Aorta (tissue), 5 donors: ENCODE measurements at regions of chr1 and their contacts with region 1.

Region 1: DNA sequence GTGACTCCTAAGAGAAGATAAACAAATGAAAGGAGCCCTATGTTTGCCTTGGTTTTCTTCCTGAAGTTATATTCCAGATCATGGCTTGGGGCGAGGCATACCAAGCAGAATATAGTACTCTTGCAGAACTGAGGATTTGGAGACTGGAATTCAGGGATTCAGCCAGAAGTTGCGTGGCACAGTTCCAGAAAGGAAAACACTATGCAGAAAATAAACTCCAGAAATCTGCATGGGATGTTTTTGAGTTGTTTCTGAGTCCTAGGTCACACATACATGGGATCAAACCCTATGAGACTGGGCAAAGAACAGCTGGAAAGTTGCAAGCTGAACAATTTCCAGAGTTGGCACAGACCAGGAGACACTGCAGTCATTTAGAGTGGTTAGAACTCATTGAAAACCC is 42.9 kb upstream of the IFFO2 start:
- DNase-seq: no peak
- ATAC-seq: peak; percentile 70
- H3K4me3 ChIP-seq: no peak overlapping the region
- H3K27ac ChIP-seq: peak overlapping the region in 1 of 2 donors; percentile 93
- H3K4me1 ChIP-seq: peaks cover 4 to 7% of the 10 kb centered on the region in 2 donors
- H3K27me3 ChIP-seq: no peaks in the 10 kb centered on the region

Region 2: GRCh38 chr1:18805925-18806849 is 193.2 kb before region 1 on chr1:
- intact Hi-C with region 1: no loop called
- DNase-seq: no peak
- ATAC-seq: no peak
- H3K4me3 ChIP-seq: no peak overlapping the region
- H3K27ac ChIP-seq: no peak overlapping the region
- H3K4me1 ChIP-seq: no peaks in the 10 kb centered on the region
- H3K27me3 ChIP-seq: no peaks in the 10 kb centered on the region

Region 3: DNA sequence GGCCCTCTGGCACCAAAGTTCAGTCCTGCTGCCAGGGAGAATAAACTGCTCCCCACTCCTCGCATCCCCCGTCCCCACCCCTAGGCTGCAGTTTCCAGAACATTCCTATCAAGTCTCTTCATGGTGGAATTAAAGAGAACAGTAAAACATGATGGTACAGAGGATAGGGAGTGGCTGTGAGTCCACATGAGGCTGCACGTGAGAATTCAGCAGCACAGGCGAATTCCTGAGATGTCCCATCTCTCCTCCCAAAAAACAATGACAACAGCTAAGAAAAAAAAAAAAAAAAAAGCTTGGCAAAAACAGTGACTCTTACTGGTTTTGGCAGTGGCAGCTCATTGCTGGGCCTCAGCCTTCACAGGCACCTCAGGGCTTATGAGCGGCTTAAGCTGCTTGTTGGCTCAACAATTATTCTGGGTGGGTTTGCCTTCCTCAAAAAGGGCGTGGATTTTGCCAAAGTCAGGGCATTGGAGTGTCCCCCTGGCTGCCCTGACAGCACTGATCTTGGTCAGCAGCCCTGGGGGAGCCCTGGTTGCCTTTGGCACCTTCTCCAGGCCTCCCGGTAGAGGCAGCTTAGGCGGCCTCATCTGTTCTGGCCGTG is 37.1 kb before region 1 on chr1:
- intact Hi-C with region 1: loop called in 1 of 2 experiments (anchors 5 kb)
- DNase-seq: peak; percentile 47 to 59
- ATAC-seq: peak; percentile 47
- H3K4me3 ChIP-seq: no peak overlapping the region
- H3K27ac ChIP-seq: no peak overlapping the region
- H3K4me1 ChIP-seq: no peaks in the 10 kb centered on the region
- H3K27me3 ChIP-seq: no peaks in the 10 kb centered on the region

Region 4: DNA sequence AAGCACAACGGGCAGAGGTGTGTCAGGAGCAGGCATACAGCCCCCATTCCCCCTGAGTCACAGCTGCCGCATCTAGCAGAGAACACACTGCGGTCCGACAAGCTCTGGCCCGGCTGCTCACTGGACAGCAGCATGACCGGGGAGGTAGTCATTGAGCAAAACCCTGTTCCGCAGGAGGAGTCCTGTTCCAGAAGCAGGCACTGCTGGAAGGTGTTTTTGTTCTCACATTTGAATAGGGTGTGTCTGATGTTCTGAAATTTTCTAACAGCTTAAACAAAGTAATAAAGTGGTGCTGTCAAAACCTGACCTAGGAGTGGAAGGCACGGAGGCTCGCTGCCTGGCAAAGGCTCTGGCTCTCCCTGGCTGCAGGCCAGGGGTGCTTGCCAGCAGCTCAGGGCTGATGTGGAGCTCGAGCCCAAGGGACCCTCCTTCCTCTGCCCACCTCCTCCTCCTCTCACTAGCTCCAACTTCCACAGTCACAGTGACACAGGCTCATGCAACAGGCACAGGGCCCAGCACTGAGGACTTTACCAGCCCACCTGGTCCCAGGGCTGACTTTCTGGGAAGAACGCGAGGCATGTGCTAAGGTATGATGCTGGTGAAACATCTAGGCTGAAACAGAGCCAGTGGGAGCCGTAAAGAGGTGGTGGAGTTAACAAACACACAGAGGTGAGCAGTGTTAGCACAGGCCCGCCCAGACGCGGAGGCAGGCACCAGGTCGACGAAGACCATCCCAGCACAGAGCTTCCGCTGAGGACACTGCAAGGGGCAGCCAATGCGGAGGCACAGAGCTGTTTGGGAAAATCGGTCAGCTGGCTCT is 75.8 kb after region 1 on chr1:
- intact Hi-C with region 1: loop called in 1 of 2 experiments (anchors 10 kb)
- DNase-seq: peak; percentile 66 to 80
- ATAC-seq: peak; percentile 37
- H3K4me3 ChIP-seq: no peak overlapping the region
- H3K27ac ChIP-seq: no peak overlapping the region
- H3K4me1 ChIP-seq: no peaks in the 10 kb centered on the region
- H3K27me3 ChIP-seq: no peaks in the 10 kb centered on the region